Activated CD8-positive, alpha-beta memory T cell treated with anti-CD3 and anti-CD28 coated beads, Interleukin-2, amount 10 ng/mL, durations not matched to agents 7 days and 5 days (primary cell): ENCODE measurements at regions of chr12 and their contacts with region 1.

Region 1: GRCh38 chr12:47742253-47742825 is 16.3 kb downstream of the RAPGEF3 start:
- DNase-seq: peak; percentile 85
- ATAC-seq: peak; percentile 69
- H3K4me3 Mint-ChIP-seq: no peak overlapping the region
- H3K27ac Mint-ChIP-seq: peak overlapping the region; percentile 35
- H3K4me1 Mint-ChIP-seq: peaks cover 14% of the 10 kb centered on the region
- H3K27me3 Mint-ChIP-seq: peaks cover 26% of the 10 kb centered on the region

Region 2: DNA sequence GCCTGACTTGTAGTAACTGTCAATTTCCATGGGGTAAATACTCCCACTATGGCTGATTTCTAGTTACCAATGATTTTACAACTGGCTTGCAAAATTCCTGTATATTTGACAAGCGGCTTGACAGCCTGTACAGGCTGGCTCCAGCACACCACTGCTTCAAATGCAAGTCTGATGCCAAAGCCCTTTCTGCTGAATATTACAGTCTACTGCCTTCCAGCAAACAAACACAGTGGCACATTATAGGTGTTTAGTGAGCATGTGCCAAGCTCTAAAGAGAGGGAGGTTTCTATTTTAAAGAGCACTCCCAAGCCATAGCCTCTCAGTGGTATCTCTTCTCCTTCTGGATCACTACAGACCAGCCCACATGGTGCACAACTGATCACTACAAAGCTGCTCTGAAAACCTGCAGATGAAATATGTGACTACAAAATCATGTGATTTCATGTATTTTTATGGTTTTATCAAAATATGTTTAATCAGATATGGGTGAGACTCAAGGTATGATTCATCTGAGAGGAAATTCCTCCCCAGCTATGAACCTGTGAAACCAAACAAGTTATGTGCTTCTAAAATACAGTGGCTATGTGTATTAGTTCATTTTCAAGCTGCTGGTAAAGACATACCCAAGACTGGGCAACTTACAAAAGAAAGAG is 138.0 kb before region 1 on chr12:
- CTCF ChIA-PET with region 1: no interaction called
- DNase-seq: no peak
- ATAC-seq: no peak
- H3K4me3 Mint-ChIP-seq: no peak overlapping the region
- H3K27ac Mint-ChIP-seq: no peak overlapping the region
- H3K4me1 Mint-ChIP-seq: peaks cover 3% of the 10 kb centered on the region
- H3K27me3 Mint-ChIP-seq: no peaks in the 10 kb centered on the region

Region 3: DNA sequence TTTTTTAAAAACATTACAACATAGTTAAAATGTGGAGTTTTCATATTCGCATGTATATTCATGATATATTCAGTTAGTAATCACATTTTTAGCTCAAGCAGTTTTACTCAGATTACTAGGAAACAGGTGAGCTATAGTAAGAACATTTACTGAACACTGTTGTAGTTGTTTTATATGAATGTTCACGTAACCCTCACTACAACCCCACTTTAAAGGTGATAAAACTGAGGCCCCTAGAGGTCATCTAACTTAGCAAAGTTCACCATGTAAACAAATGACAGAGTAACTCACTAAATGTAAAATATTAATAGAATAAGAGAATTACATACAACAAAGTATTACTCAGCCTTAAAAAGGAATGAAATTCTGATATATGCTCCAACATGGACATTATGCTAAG is 62.6 kb before region 1 on chr12:
- CTCF ChIA-PET with region 1: no interaction called
- DNase-seq: no peak
- ATAC-seq: no peak
- H3K4me3 Mint-ChIP-seq: no peak overlapping the region
- H3K27ac Mint-ChIP-seq: no peak overlapping the region
- H3K4me1 Mint-ChIP-seq: peaks cover 1% of the 10 kb centered on the region
- H3K27me3 Mint-ChIP-seq: no peaks in the 10 kb centered on the region

Region 4: GRCh38 chr12:47715393-47715876 is 26.9 kb before region 1 on chr12:
- CTCF ChIA-PET with region 1: interaction called, 341 read pairs
- DNase-seq: peak; percentile 88
- ATAC-seq: peak; percentile 89
- H3K4me3 Mint-ChIP-seq: no peak overlapping the region
- H3K27ac Mint-ChIP-seq: peak overlapping the region; percentile 44
- H3K4me1 Mint-ChIP-seq: peaks cover 27% of the 10 kb centered on the region
- H3K27me3 Mint-ChIP-seq: no peaks in the 10 kb centered on the region

Region 5: GRCh38 chr12:47797441-47797840 is 55.1 kb after region 1 on chr12:
- CTCF ChIA-PET with region 1: interaction called, 15 read pairs
- DNase-seq: peak; percentile 61
- ATAC-seq: peak; percentile 72
- H3K4me3 Mint-ChIP-seq: no peak overlapping the region
- H3K27ac Mint-ChIP-seq: peak overlapping the region; percentile 66
- H3K4me1 Mint-ChIP-seq: peaks cover 29% of the 10 kb centered on the region
- H3K27me3 Mint-ChIP-seq: no peaks in the 10 kb centered on the region

Region 6: GRCh38 chr12:47828608-47829536 is 86.5 kb after region 1 on chr12:
- CTCF ChIA-PET with region 1: interaction called, 385 read pairs
- DNase-seq: no peak
- ATAC-seq: no peak
- H3K4me3 Mint-ChIP-seq: no peak overlapping the region
- H3K27ac Mint-ChIP-seq: peak overlapping the region; percentile 63
- H3K4me1 Mint-ChIP-seq: peaks cover 73% of the 10 kb centered on the region
- H3K27me3 Mint-ChIP-seq: no peaks in the 10 kb centered on the region